ENCODE measurements at regions of chr1 and their contacts with region 1.

Region 1: GRCh38 chr1:25037174-25038074 is 107.3 kb upstream of the RUNX3 start:
- DNase-seq: peak; percentile 75
- ATAC-seq: peak; percentile 22
- H3K4me3 Mint-ChIP-seq: no peak overlapping the region
- H3K27ac Mint-ChIP-seq: peak overlapping the region; percentile 39
- H3K4me1 Mint-ChIP-seq: peaks cover 28% of the 10 kb centered on the region
- H3K27me3 Mint-ChIP-seq: peaks cover 3% of the 10 kb centered on the region

Region 2: DNA sequence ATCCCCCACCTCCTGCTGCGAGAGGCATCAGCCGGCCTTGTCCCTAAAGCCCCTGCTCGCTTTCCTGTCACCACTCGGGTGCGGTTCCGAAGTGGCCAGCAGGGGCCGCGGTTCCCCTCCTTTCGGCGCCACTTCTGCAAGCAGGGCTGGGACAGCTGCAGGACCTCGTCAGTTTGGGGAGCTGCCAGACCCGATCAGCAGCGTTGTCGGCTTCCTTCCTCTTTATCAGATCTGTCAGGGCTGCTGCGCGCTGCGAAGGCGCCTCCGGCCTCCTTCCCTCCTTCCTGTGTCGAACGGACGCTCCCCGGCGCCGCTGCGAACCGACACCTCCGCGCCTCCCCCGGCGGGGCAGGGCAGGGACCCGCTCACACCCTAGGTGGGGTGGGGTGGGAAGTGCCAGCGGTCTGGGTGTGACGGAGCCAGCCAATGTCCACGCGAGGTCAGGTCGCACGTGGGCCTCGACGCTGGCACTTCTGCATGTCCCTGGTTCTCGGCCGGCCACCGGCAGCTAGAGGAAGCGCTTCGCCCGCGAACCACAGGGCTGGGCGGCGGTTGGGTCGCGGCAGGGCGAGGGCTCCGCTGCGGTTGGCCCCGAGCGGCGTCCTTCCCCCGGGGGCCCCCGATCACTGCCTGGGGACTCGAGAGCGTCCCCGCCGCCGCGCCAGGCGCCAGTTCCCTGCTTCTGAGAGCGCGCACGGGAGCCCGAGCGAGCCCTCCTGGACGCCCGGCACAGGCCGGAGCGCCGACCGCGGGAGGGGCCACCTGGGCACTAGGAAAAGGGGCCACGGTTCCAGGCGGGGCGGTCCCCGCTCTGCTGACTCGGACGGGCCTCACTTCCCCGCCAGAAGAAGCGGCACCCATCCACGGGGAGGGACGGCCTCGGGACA is 189.2 kb before region 1 on chr1:
- CTCF ChIA-PET with region 1: interaction called, 17 read pairs
- POLR2A ChIA-PET with region 1: no interaction called
- DNase-seq: peak; percentile 94
- ATAC-seq: peak; percentile 98
- H3K4me3 Mint-ChIP-seq: peak overlapping the region; percentile 56
- H3K27ac Mint-ChIP-seq: peak overlapping the region; percentile 70
- H3K4me1 Mint-ChIP-seq: peaks cover 24% of the 10 kb centered on the region
- H3K27me3 Mint-ChIP-seq: peaks cover 47% of the 10 kb centered on the region

Region 3: DNA sequence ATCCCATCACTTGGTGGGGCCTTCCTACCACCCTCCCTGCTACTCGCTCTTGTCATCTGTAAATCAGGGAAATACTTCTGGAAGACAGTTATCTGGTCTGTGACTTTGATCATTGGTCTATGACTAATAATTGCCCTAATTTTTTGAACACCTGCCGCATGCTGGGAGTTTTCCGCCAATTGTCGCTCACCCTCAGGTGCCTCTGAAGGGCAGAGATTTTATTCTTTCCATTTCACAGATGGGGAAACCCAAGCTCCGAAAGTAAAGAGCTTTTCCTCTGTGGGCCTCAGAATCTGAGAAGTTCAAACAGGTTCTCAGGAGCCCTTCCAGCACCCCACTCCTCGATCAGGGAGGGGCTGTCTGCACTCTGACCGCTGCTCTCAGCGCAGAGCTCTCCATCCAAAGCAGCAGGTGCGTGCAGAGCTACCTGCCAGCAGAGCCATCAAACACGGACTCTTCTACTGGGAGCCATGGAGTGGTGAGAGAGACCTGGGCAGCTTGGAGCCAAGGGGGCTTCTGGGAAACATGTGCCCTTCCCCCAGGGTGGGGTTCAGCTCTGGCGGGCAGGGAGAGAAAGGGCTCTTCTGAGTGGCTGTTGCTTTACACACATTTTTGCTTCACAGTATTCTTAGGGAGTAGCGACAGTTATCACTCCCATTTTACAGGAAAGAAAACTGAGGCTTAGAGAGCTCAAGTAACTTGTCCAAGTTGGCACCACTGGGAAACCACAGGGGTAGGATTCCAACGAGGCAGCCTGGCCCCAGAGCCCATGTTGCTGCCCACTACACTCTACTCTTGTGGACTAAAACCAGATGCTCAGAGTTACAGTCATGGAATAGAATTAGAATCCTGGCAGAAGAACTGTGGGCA is 101.6 kb before region 1 on chr1:
- CTCF ChIA-PET with region 1: interaction called, 85 read pairs
- POLR2A ChIA-PET with region 1: interaction called, 3 read pairs
- DNase-seq: no peak
- ATAC-seq: no peak
- H3K4me3 Mint-ChIP-seq: no peak overlapping the region
- H3K27ac Mint-ChIP-seq: peak overlapping the region; percentile 44
- H3K4me1 Mint-ChIP-seq: peaks cover 93% of the 10 kb centered on the region
- H3K27me3 Mint-ChIP-seq: no peaks in the 10 kb centered on the region

Region 4: GRCh38 chr1:24964811-24965570 is 72.4 kb before region 1 on chr1:
- CTCF ChIA-PET with region 1: interaction called, 225 read pairs
- POLR2A ChIA-PET with region 1: interaction called, 96 read pairs
- DNase-seq: peak; percentile 99
- ATAC-seq: peak; percentile 81
- H3K4me3 Mint-ChIP-seq: peak overlapping the region; percentile 92
- H3K27ac Mint-ChIP-seq: peak overlapping the region; percentile 98
- H3K4me1 Mint-ChIP-seq: peaks cover 67% of the 10 kb centered on the region
- H3K27me3 Mint-ChIP-seq: no peaks in the 10 kb centered on the region

Region 5: GRCh38 chr1:24987875-24988557 is 49.4 kb before region 1 on chr1:
- CTCF ChIA-PET with region 1: interaction called, 136 read pairs
- POLR2A ChIA-PET with region 1: interaction called, 9 read pairs
- DNase-seq: no peak
- ATAC-seq: no peak
- H3K4me3 Mint-ChIP-seq: no peak overlapping the region
- H3K27ac Mint-ChIP-seq: peak overlapping the region; percentile 31
- H3K4me1 Mint-ChIP-seq: peaks cover 98% of the 10 kb centered on the region
- H3K27me3 Mint-ChIP-seq: no peaks in the 10 kb centered on the region

Region 6: GRCh38 chr1:25022361-25023189 is 14.8 kb before region 1 on chr1:
- CTCF ChIA-PET with region 1: interaction called, 29 read pairs
- POLR2A ChIA-PET with region 1: interaction called, 42 read pairs
- DNase-seq: peak; percentile 98
- ATAC-seq: peak; percentile 89
- H3K4me3 Mint-ChIP-seq: peak overlapping the region; percentile 78
- H3K27ac Mint-ChIP-seq: peak overlapping the region; percentile 88
- H3K4me1 Mint-ChIP-seq: peaks cover 96% of the 10 kb centered on the region
- H3K27me3 Mint-ChIP-seq: no peaks in the 10 kb centered on the region

Measured in activated CD8-positive, alpha-beta T cell treated with anti-CD3 and anti-CD28 coated beads, Interleukin-2, amount 10 ng/mL, durations not matched to agents 7 days and 5 days (primary cell).